ENCODE measurements at regions of chr12 and their contacts with region 1.

Region 1: DNA sequence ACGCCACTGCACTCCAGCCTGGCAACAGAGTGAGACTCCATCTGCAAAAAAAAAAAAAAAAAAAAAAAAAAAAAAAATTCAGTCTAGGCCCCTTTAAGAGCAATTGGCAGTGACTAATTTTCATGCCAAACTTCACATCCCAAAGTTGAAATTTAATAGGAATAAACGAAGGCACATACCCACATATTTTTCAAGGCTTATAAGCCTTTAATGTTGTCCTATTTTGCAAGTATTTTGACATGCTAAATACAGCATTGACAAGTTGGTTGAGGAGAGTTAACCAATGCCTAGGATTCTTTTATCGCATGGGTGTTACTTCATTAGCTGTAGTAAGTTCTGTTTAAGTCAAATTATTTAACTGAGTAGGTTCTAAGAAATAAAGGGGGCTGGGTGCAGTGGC is 23.5 kb upstream of the HIP1R start:
- DNase-seq: no peak
- H3K4me3 ChIP-seq: no peak overlapping the region
- H3K27ac ChIP-seq: no peak overlapping the region
- H3K4me1 ChIP-seq: no peaks in the 10 kb centered on the region
- H3K27me3 ChIP-seq: no peaks in the 10 kb centered on the region
- CTCF ChIP-seq: no peak
- EP300 ChIP-seq: no peak
- POLR2A ChIP-seq: no peak

Region 2: GRCh38 chr12:122834921-122835749 is 23.4 kb after region 1 on chr12 and contains the start of gene HIP1R:
- in situ Hi-C with region 1: no loop called
- intact Hi-C with region 1: loop called (anchors 1 kb)
- DNase-seq: peak; percentile 71
- H3K4me3 ChIP-seq: peak within 1 kb of the TSS; percentile 63 to 90 (median 84)
- H3K27ac ChIP-seq: peak within 1 kb of the TSS; percentile 88 to 94 (median 93)
- H3K4me1 ChIP-seq: peaks cover 0 to 52% (median 42%) of the 10 kb centered on the region in 4 donors
- H3K27me3 ChIP-seq: no peaks in the 10 kb centered on the region
- CTCF ChIP-seq: no peak
- EP300 ChIP-seq: no peak
- POLR2A ChIP-seq: no peak
- total RNA-seq, gene HIP1R: 72.4 to 459 (median 146) TPM